ENCODE measurements at regions of chr17 and their contacts with region 1.

Region 1: DNA sequence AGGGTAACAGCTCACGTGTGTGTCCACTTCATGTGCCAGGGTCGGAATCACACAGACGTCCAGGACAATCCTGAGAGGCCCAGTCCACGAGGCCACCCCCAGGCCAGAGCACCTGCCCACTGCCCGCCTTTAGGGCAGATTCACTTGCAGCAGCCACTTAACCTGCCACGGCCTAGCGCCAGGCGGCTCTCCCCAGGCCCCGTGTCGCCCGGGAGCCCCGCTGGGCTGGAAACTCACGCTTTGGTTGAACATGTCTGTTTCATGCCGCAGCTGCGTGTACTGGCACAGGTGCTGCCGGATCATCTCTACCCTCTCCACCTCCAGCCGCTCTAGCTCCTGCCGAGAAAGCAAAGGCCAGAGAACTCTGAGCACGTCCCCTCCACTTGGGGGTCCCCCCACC is 12.7 kb upstream of the RCVRN start:
- DNase-seq: no peak
- H3K4me3 ChIP-seq: no peak overlapping the region
- H3K27ac ChIP-seq: no peak overlapping the region
- H3K4me1 ChIP-seq: no peaks in the 10 kb centered on the region
- H3K27me3 ChIP-seq: no peaks in the 10 kb centered on the region
- CTCF ChIP-seq: no peak
- EP300 ChIP-seq: no peak
- POLR2A ChIP-seq: no peak

Region 2: DNA sequence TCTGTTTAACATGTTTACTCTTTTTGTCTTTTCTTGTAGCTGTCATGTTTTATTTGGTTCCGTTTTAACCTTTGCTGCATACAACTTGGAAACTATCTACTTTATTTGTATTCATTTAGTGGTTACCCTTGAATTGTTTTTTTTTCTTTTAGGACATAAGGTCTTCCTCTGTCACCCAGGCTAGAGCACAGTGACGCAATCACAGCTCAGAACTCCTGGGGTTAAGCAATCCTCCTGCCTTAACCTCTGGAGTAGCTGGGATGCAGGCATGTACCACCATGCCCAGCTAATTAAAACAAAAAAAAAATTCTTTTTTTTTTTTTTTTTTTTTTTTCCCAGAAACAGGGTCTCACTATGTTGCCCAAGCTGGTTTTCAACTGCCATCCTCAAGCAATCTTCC is 302.3 kb before region 1 on chr17:
- in situ Hi-C with region 1: no loop called
- intact Hi-C with region 1: no loop called
- DNase-seq: no peak
- H3K4me3 ChIP-seq: no peak overlapping the region
- H3K27ac ChIP-seq: no peak overlapping the region
- H3K4me1 ChIP-seq: no peaks in the 10 kb centered on the region
- H3K27me3 ChIP-seq: no peaks in the 10 kb centered on the region
- CTCF ChIP-seq: no peak
- EP300 ChIP-seq: no peak
- POLR2A ChIP-seq: no peak

Region 3: DNA sequence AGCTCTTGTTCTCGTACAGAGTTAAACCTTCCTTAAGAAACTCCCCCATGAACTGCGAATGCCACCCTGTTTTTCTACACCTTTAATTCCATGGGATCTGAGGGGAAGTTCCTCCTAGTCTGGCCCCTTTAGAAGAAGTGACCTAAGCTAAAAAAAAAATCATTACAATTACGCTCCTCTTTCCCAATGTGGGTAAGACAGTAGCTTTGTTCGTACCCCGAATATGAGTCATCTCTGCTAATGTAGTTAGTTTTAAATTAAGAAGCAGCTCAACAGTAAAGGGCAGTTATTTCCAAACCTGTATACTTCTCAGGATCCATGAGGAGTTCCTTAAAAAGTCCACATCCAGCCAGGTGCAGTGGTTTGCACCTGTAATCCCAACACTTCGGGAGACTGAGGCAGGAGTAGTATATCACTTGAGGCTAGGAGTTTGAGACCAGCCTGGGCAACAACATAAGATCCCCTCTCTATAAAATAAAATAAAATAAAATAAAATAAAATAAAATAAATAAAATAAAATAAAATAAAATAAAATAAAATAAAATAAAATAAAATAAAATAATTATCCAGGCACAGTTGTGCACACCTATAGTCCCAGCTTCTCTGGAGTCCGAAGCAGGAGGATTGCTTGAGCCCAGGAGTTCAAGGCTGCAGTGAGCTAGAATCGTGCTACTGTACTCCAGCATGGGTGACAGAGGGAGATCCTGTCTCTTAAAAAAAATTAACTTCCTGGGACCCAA is 38.8 kb before region 1 on chr17:
- in situ Hi-C with region 1: no loop called
- intact Hi-C with region 1: loop called (anchors 1 kb)
- DNase-seq: no peak
- H3K4me3 ChIP-seq: no peak overlapping the region
- H3K27ac ChIP-seq: no peak overlapping the region
- H3K4me1 ChIP-seq: peaks cover 0 to 13% (median 1%) of the 10 kb centered on the region in 4 donors
- H3K27me3 ChIP-seq: no peaks in the 10 kb centered on the region
- CTCF ChIP-seq: no peak
- EP300 ChIP-seq: no peak
- POLR2A ChIP-seq: no peak